ENCODE measurements at regions of chr6 and their contacts with region 1.

Region 1: GRCh38 chr6:10793695-10794094 is 44.6 kb downstream of the MAK start:
- DNase-seq: no peak
- CTCF ChIP-seq: no peak

Region 2: DNA sequence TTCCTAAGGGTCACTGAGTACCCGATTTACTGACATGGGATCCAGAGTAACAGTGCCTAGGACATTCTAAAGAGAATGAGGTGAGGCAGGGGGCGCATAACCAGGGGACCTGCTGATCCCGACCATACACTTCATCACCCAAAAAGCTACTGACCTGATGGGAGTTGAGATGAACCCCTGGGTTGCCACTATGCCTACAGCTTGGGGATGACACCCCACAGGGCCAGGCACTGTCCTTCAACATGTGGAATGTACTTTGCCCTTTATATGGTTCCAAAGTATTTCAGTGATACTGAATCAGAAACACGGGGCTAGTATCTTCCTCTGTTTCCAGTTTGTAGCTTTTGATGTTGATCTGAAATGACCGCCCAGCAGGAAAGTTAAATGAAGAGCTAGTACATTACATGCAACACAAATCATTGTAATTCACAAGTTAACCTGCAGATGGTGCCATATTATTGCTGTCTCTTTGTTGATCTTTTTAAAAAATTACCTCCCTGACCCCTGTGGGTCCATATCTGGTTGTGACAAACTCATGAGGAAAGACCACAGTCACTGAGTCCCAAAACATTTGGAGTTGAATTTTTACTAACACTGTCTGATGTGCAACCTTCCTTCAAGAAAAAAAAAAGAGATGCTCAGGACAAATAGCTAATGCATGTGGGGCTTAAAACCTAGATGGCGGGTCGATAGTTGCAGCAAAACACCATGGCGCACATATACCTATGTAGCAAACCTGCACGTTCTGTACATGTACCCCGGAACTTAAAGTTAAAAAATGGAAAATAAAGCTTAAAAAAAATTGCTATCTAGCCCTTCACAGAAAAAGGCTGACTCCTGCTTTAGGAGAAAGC is 315.3 kb before region 1 on chr6:
- in situ Hi-C with region 1: loop called (anchors 10 kb)
- DNase-seq: peak; percentile 75
- CTCF ChIP-seq: peak; percentile 61

Region 3: GRCh38 chr6:10505529-10505928 is 288.2 kb before region 1 on chr6:
- in situ Hi-C with region 1: loop called (anchors 10 kb)
- DNase-seq: no peak
- CTCF ChIP-seq: no peak

Region 4: DNA sequence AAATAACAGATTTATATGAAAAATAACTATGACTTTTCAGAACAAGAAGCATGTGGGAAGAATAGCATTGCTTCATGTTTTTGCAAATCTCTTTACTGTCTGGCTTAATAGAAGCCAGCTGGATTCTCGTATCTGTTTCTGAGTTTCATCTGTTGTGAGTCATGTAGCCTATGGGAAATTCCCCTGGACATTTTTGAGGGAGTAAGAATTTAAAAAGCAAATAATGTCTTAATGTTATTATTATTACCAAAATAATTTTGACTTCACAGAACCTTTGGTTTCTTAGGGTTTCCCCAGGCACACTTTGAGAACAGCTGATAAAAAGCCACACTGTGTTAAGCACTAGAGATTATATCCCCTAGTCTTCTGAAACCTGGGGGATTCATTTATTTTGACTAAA is 169.0 kb after region 1 on chr6:
- in situ Hi-C with region 1: no loop called
- DNase-seq: peak; percentile 19
- CTCF ChIP-seq: no peak

Measured in GM13977 (cell line).